Panc1 (cell line): ENCODE measurements at regions of chr11 and their contacts with region 1.

Region 1: GRCh38 chr11:78228467-78228866 is 39.7 kb downstream of the USP35 start:
- DNase-seq: peak; percentile 48
- ATAC-seq: peak; percentile 90
- H3K4me3 ChIP-seq: no peak overlapping the region
- H3K27ac ChIP-seq: no peak overlapping the region
- H3K4me1 ChIP-seq: no peaks in the 10 kb centered on the region
- H3K27me3 ChIP-seq: no peaks in the 10 kb centered on the region
- CTCF ChIP-seq: peak; percentile 85

Region 2: GRCh38 chr11:78432058-78432515 is 203.6 kb after region 1 on chr11:
- CTCF ChIA-PET with region 1: interaction called, 15 read pairs
- POLR2A ChIA-PET with region 1: interaction called, 4 read pairs
- in situ Hi-C with region 1: no loop called
- intact Hi-C with region 1: no loop called
- DNase-seq: no peak
- ATAC-seq: no peak
- H3K4me3 ChIP-seq: no peak overlapping the region
- H3K27ac ChIP-seq: no peak overlapping the region
- H3K4me1 ChIP-seq: no peaks in the 10 kb centered on the region
- H3K27me3 ChIP-seq: no peaks in the 10 kb centered on the region
- CTCF ChIP-seq: peak; percentile 79

Region 3: GRCh38 chr11:78564490-78565467 is 336.3 kb after region 1 on chr11:
- CTCF ChIA-PET with region 1: interaction called, 20 read pairs
- POLR2A ChIA-PET with region 1: no interaction called
- in situ Hi-C with region 1: no loop called
- intact Hi-C with region 1: loop called (anchors 1 kb)
- DNase-seq: peak; percentile 43
- ATAC-seq: peak; percentile 72
- H3K4me3 ChIP-seq: no peak overlapping the region
- H3K27ac ChIP-seq: no peak overlapping the region
- H3K4me1 ChIP-seq: peaks cover 6% of the 10 kb centered on the region; the same call in 1 of the 2 replicates
- H3K27me3 ChIP-seq: no peaks in the 10 kb centered on the region
- CTCF ChIP-seq: peak; percentile 85